GM23248 (cell line): ENCODE measurements at regions of chrX and their contacts with region 1.

Region 1: GRCh38 chrX:45515262-45516215 is 314.9 kb upstream of the DIPK2B start:
- DNase-seq: peak; percentile 94
- H3K4me3 ChIP-seq: no peak overlapping the region
- H3K27ac ChIP-seq: peak overlapping the region; percentile 83
- H3K4me1 ChIP-seq: peaks cover 44% of the 10 kb centered on the region
- H3K27me3 ChIP-seq: no peaks in the 10 kb centered on the region

Region 2: GRCh38 chrX:45710081-45710801 is 194.7 kb after region 1 on chrX:
- in situ Hi-C with region 1: loop called (anchors 25 kb)
- DNase-seq: peak; percentile 90
- H3K4me3 ChIP-seq: no peak overlapping the region
- H3K27ac ChIP-seq: peak overlapping the region; percentile 93
- H3K4me1 ChIP-seq: peaks cover 50% of the 10 kb centered on the region
- H3K27me3 ChIP-seq: no peaks in the 10 kb centered on the region

Region 3: DNA sequence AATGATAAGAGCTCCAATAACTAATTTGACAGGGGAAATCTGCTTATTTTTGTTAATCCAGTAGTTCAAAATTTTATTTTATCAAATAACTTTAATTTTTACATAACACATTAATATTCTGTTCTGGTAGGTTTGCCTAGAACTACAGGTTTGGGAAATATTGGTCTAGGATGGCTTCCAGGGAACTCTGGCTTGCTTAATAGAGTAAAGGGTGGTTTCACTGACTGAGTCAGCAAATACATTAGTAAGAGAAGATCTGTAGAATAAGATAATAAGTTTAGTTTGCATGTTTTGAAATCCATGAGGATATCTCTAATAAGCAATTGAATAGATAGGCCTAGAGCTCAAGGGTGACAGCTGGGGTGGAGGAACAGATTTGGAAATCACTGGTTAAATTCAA is 528.9 kb after region 1 on chrX:
- in situ Hi-C with region 1: no loop called
- DNase-seq: peak; percentile 20
- H3K4me3 ChIP-seq: no peak overlapping the region
- H3K27ac ChIP-seq: no peak overlapping the region
- H3K4me1 ChIP-seq: no peaks in the 10 kb centered on the region
- H3K27me3 ChIP-seq: no peaks in the 10 kb centered on the region